Kidney (tissue), 22 donors: ENCODE measurements at regions of chr12 and their contacts with region 1.

Region 1: DNA sequence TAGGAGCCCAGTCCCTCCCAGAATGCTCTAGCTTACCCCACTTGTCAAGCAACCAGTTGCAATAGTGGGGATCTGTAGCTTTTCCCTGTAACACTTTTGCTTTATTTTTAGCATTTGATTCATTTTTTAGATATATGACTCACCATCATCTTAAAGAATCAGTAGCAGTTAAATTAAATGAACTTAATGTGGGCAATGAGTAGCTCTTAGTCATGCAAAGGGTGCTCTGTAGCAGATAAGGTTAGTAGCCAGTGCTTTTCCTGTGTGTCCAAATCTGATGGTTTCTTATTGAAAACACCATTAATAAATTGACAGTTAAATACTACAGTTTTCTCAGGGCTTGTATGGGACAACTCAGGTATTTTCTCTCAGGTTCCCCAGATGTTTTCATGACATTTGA is 311.8 kb downstream of the RERGL start:
- DNase-seq: no peak
- H3K4me3 ChIP-seq: no peak overlapping the region
- H3K27ac ChIP-seq: no peak overlapping the region
- H3K4me1 ChIP-seq: no peaks in the 10 kb centered on the region
- H3K27me3 ChIP-seq: no peaks in the 10 kb centered on the region
- CTCF ChIP-seq: no peak

Region 2: GRCh38 chr12:17866802-17867201 is 88.6 kb after region 1 on chr12:
- intact Hi-C with region 1: loop called (anchors 2 kb)
- DNase-seq: no peak
- H3K4me3 ChIP-seq: no peak overlapping the region
- H3K27ac ChIP-seq: no peak overlapping the region
- H3K4me1 ChIP-seq: no peaks in the 10 kb centered on the region
- H3K27me3 ChIP-seq: no peaks in the 10 kb centered on the region
- CTCF ChIP-seq: no peak